Activated CD4-positive, alpha-beta T cell treated with anti-CD3 and anti-CD28 coated beads, Interleukin-2, amount 10 ng/mL, durations not matched to agents 7 days and 5 days (primary cell): ENCODE measurements at regions of chr3 and their contacts with region 1.

Region 1: DNA sequence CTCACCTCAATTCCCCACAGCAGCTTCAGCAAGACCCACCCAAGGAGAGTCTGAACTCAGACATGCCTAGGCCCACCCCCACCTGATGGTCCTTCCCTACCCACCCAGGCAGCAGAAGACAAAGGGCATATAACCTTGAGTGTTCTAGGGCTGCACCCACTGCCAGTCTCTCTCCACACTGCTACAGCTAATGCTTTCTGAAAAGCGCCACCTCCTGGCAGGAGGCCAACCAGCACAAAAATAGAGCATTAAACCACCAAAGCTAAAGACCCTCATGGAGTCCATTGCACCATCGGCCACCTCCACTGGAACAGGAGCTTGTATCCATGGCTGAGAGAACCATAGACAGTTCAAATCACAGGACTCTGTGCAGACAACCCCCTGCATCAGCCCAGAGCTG is 11.3 kb upstream of the RPL39L start:
- DNase-seq: peak; percentile 59
- H3K4me3 Mint-ChIP-seq: no peak overlapping the region
- H3K27ac Mint-ChIP-seq: no peak overlapping the region
- H3K4me1 Mint-ChIP-seq: peaks cover 3% of the 10 kb centered on the region
- H3K27me3 Mint-ChIP-seq: peaks cover 41% of the 10 kb centered on the region

Region 2: GRCh38 chr3:186849374-186849975 is 301.1 kb before region 1 on chr3:
- CTCF ChIA-PET with region 1: interaction called, 14 read pairs
- POLR2A ChIA-PET with region 1: no interaction called
- DNase-seq: peak; percentile 40
- H3K4me3 Mint-ChIP-seq: no peak overlapping the region
- H3K27ac Mint-ChIP-seq: peak overlapping the region; percentile 33
- H3K4me1 Mint-ChIP-seq: peaks cover 23% of the 10 kb centered on the region
- H3K27me3 Mint-ChIP-seq: peaks cover 14% of the 10 kb centered on the region

Region 3: DNA sequence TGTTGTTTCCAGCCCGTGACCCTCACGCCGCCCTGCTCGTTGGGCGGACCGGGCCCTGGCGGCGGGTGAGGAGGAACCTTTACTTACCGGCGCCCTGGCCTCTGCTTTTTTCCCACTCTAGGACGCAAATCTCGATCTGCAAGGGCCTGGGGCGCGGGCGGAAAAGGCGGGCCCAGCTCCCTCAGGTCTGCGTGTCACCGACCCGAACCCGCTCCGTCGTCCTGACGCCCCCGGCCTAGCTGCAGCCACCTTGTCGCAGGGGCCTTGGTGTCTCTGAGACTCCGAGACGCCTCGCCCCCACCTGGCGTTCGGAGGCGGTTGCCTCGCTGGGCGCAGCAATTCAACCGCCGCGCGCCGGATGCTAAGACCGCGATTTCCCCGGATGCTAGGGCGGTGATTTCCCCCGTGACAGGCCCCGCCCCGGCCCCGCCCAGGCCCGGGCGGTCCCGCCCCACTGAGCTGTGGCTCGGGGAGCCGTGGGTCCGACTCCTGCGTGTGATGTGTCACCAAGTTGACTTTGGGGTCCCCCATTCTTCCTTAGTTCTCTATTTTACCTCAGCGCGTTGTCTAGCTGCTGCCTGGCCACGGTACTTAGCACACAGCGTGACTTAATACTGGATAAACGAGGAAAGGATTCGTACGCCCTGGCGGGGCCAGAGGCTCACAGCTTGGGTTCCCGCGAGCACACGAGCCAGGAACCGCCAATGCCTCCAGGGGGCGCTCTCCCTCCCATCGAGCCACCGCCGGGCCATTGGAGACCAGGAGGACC is 11.3 kb before region 1 on chr3 and contains the start of gene RPL39L:
- CTCF ChIA-PET with region 1: interaction called, 72 read pairs
- POLR2A ChIA-PET with region 1: no interaction called
- DNase-seq: peak; percentile 92
- H3K4me3 Mint-ChIP-seq: peak within 1 kb of the TSS; percentile 82
- H3K27ac Mint-ChIP-seq: peak within 1 kb of the TSS; percentile 96
- H3K4me1 Mint-ChIP-seq: peaks cover 26% of the 10 kb centered on the region
- H3K27me3 Mint-ChIP-seq: no peaks in the 10 kb centered on the region
- total RNA-seq, gene RPL39L: 18.4 to 20.4 TPM

Region 4: DNA sequence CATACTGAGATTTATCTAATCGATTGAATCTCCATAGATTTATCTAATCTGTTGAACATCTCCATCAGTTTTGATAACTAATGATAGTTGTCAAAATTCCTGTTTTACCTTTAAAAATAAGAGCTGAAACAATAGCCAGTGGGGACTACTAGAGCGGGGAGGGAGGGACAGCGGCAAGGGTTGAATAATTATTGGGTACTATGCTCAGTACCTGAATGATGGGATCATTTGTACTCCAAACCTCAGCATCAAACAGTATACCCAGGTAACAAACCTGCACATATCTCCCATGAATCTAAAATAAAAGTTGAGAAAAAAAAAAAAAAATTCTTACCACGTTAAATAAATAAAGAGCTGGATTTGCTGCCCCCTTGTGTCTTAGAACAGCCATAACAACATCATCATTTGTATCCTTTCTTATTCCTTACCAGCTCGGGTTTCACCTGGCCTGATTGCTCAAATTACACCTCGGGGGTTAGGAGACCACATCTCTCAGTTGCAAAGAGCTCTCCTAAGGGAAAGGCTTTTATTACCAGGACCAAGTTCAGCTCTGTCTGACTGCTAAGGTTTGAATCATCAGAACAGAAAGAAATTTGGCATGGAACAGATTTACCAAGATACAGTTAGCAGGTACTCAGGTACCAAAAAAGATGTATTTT is 14.4 kb after region 1 on chr3:
- CTCF ChIA-PET with region 1: interaction called, 14 read pairs
- POLR2A ChIA-PET with region 1: no interaction called
- DNase-seq: peak; percentile 65
- H3K4me3 Mint-ChIP-seq: no peak overlapping the region
- H3K27ac Mint-ChIP-seq: no peak overlapping the region
- H3K4me1 Mint-ChIP-seq: peaks cover 9% of the 10 kb centered on the region
- H3K27me3 Mint-ChIP-seq: peaks cover 14% of the 10 kb centered on the region